MCF 10A (cell line): ENCODE measurements at regions of chr11 and their contacts with region 1.

Region 1: GRCh38 chr11:17014838-17015626 is 818 bp upstream of the PLEKHA7 start:
- DNase-seq: peak; percentile 72
- H3K4me3 Mint-ChIP-seq: no peak overlapping the region
- H3K27ac Mint-ChIP-seq: no peak overlapping the region
- H3K4me1 Mint-ChIP-seq: no peaks in the 10 kb centered on the region
- H3K27me3 Mint-ChIP-seq: no peaks in the 10 kb centered on the region
- CTCF ChIP-seq: peak; percentile 27

Region 2: DNA sequence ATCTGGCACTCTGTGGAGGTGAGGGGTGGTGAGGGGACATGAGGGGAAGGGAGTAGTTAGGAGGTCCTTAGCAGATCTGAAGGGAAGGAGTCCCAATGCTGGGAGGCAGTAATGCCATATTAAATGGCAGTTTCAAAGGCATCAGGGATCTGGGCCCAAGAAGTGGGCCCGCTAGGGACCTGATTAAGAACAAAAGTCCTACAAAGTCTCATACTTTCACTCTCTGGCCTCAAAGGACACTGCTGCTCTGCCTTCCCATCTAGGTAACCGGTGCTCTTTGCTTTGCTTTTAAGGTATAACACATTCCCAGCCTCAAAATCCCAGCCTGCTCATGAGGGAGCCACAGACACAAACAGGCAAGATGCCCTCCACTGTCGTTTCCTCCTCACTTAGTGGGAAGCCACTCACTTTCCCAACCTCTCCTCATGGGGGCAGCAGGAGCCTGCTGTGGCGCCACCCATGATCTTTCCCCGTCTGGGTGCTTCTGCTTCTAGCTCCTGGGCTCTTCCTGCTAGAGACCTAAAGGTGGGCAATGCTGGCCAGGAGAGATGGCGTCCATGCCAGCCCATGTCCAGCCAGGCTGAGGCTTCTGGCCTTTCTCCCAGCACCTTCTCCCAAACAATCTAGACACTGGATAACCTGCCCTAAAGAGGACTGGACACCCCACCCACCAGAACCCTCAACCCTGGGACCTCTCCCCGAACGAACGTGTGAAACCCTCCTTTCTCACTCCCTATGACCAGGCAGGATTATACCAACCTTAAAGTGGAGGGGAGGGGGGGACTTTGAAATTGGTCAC is 69.2 kb before region 1 on chr11:
- CTCF ChIA-PET with region 1: interaction called, 6 read pairs
- POLR2A ChIA-PET with region 1: no interaction called
- intact Hi-C with region 1: loop called (anchors 10 kb)
- DNase-seq: peak; percentile 76
- H3K4me3 Mint-ChIP-seq: no peak overlapping the region
- H3K27ac Mint-ChIP-seq: no peak overlapping the region
- H3K4me1 Mint-ChIP-seq: no peaks in the 10 kb centered on the region
- H3K27me3 Mint-ChIP-seq: no peaks in the 10 kb centered on the region
- CTCF ChIP-seq: peak; percentile 75